Activated CD4-positive, alpha-beta memory T cell treated with anti-CD3 and anti-CD28 coated beads for 36 hours (primary cell): ENCODE measurements at regions of chr7 and their contacts with region 1.

Region 1: DNA sequence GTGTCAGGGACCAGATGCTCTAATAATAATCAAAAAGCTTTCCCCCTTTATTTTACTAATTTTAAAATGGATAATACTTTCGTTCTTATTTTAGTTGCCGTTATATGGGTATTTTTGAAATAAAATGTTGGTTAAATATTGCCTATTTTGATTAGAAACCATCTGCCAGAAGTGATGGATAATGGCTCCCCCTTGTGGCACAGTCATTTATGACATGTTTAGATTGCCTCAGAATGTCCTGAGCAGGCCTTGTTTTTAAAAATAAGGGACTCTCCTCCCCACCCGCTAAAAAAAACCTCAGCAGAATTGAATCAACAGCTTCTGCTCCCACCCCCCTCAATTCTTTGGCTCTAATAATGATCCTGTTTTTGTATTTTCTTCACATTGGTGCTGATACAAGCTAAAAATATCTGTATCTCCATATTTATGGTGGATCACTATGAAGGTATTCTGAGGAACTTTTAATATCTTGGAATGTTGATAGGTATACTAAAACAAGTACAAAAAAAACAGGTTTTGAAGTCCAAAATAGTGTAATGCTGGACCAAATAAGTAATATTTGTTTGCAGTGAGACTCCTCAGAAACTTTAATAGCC is 38.8 kb downstream of the TMEM60 start:
- DNase-seq: peak; percentile 65
- H3K4me3 Mint-ChIP-seq: no peak overlapping the region
- H3K27ac Mint-ChIP-seq: no peak overlapping the region
- H3K4me1 Mint-ChIP-seq: peaks cover 21% of the 10 kb centered on the region
- H3K27me3 Mint-ChIP-seq: no peaks in the 10 kb centered on the region

Region 2: DNA sequence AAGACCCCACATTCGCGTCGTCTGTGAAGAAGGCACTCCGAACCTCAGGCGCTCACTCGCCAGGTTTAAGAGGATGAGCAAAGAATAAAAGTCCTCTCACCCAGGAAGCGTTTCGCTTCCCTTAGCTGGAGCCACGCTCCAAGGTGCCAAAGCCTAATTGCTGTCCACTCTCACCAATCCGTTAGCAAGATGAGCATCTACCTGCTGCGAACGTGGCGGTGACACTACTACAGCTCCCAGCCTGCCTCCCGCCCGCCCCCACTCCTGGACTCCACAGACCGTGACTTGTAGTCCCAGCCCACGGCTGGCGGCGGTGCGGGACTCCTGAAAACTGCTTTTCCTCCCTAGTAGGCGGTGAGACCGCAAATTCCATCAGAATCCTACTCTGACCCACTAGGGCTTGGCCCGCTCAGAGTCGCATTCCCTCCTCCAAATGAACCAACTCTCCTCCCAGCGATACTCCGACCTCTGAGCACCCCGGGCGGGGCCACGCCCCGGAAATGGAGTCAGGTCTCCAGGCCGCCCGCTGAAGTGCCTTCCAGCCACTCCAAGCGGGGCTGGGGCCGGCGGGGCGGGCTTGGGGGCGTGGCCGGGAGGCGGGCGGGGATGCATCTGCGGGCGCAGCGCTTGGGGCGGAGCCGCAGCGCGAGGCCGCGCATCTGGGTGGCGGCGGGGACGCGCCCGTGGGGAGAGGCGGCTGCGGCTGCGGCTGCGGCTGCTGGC is 222.8 kb before region 1 on chr7:
- CTCF ChIA-PET with region 1: no interaction called
- POLR2A ChIA-PET with region 1: no interaction called
- intact Hi-C with region 1: loop called (anchors 5 kb)
- DNase-seq: peak; percentile 99
- H3K4me3 Mint-ChIP-seq: peak overlapping the region; percentile 97
- H3K27ac Mint-ChIP-seq: peak overlapping the region; percentile 87
- H3K4me1 Mint-ChIP-seq: peaks cover 13% of the 10 kb centered on the region
- H3K27me3 Mint-ChIP-seq: no peaks in the 10 kb centered on the region

Region 3: GRCh38 chr7:77657427-77658224 is 101.8 kb before region 1 on chr7:
- CTCF ChIA-PET with region 1: interaction called, 156 read pairs
- POLR2A ChIA-PET with region 1: no interaction called
- intact Hi-C with region 1: loop called (anchors 1 kb)
- DNase-seq: no peak
- H3K4me3 Mint-ChIP-seq: no peak overlapping the region
- H3K27ac Mint-ChIP-seq: no peak overlapping the region
- H3K4me1 Mint-ChIP-seq: no peaks in the 10 kb centered on the region
- H3K27me3 Mint-ChIP-seq: no peaks in the 10 kb centered on the region

Region 4: DNA sequence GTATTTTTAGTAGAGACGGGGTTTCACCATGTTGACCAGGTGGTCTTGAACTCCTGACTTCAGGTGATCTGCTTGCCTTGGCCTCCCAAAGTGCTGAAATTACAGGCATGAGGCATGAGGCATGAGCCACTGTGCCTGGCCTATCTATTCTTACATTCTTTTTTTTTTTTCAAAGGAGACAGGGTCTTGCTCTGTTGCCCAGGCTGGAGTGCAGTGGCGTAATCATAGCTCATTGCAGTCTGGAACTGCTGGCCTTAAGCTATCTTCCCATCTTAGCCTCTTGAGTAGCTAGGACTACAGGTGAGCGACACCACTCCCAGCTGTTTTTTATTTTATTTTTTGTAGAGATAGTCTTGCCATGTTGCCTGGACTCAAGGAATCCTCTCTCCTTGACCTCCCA is 42.6 kb before region 1 on chr7:
- CTCF ChIA-PET with region 1: interaction called, 4 read pairs
- POLR2A ChIA-PET with region 1: no interaction called
- intact Hi-C with region 1: loop called (anchors 1 kb)
- DNase-seq: no peak
- H3K4me3 Mint-ChIP-seq: no peak overlapping the region
- H3K27ac Mint-ChIP-seq: no peak overlapping the region
- H3K4me1 Mint-ChIP-seq: peaks cover 41% of the 10 kb centered on the region
- H3K27me3 Mint-ChIP-seq: no peaks in the 10 kb centered on the region

Region 5: DNA sequence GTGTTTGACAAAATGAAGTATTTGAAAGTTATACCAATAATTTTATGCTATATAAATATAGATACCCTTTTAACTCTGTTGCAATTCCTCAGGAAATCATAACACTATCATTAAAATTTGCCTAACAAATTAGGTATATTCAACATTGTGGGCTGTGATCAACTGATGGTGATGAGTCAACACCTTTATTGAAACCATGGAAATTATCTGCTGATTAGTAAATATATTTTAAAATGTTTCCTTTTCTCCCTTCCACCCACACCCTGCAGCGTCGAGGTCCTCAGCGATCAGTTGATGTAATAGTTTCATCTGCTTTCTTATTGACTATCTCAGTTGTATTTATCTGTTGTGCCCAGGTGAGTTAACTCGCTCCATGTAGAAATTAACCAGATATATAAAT is 183.0 kb after region 1 on chr7:
- CTCF ChIA-PET with region 1: no interaction called
- POLR2A ChIA-PET with region 1: no interaction called
- intact Hi-C with region 1: no loop called
- DNase-seq: no peak
- H3K4me3 Mint-ChIP-seq: no peak overlapping the region
- H3K27ac Mint-ChIP-seq: no peak overlapping the region
- H3K4me1 Mint-ChIP-seq: peaks cover 12% of the 10 kb centered on the region
- H3K27me3 Mint-ChIP-seq: no peaks in the 10 kb centered on the region

Region 6: DNA sequence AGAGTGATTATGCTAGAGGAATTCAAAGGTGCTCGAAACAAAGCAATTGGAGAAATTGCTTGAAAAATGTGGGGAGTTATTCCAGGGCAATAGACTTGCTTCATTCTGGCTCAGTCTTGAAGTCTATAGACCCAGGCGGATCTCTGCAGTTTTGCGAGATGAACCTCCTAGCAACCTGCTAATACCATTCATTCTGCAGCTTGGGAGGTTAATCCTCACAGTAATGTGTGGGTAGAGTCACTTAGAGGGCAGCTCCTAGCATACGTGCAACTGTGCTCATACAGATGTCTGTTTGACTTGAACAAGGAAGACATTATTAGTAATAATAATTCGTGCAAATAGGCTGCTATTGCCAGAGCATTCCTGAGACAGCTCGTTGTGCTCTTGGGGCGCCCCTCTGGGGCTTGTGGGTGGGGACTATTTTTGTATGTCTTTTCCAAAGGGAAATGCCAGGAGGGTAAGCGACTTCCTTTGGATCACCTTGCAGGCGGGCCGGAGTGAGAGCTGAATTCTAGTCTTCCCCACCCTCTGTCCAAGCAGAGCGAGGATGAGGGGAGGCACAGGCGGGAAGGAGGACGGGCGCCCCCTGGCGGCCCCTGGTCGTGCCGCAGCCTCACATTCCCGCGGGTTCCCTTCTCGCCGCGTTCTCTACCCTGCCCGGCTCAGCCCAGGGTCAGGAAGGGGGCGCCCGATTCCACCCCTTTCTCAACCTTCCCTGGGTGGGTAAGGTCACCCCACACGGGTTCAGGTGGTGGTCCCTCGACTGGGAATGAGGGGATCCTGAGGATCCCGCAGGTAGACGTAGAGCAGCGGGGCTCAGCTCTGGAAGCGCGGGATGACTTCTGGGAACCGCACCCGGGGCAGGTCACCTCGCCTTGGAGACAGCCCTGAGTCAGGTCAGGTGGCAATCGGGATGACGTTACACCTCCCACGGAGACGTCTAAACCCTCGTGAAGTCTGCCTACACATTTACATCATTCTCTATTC is 280.7 kb after region 1 on chr7:
- CTCF ChIA-PET with region 1: no interaction called
- POLR2A ChIA-PET with region 1: no interaction called
- intact Hi-C with region 1: loop called (anchors 1 kb)
- DNase-seq: peak; percentile 70
- H3K4me3 Mint-ChIP-seq: no peak overlapping the region
- H3K27ac Mint-ChIP-seq: no peak overlapping the region
- H3K4me1 Mint-ChIP-seq: peaks cover 4% of the 10 kb centered on the region
- H3K27me3 Mint-ChIP-seq: peaks cover 16% of the 10 kb centered on the region

Region 7: DNA sequence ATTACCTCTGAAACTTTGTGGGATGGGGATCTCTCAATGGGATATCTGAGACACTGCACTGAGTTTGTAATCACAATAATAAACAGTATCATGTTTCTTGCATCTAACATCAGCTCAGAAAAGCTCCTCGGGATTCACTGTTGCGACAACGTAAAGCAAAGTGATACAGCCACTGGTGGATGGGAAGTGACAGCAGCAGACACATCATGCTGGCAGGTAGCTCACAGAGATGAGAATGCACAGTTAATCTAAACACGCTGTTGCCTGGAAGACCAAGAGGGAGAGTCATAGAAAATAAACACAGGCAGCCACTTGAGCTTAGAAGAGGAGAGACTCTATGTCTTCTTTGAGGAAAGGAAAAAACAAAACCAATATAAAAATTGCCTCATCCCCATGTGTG is 1180.3 kb after region 1 on chr7:
- CTCF ChIA-PET with region 1: no interaction called
- POLR2A ChIA-PET with region 1: no interaction called
- intact Hi-C with region 1: no loop called
- DNase-seq: no peak
- H3K4me3 Mint-ChIP-seq: no peak overlapping the region
- H3K27ac Mint-ChIP-seq: no peak overlapping the region
- H3K4me1 Mint-ChIP-seq: no peaks in the 10 kb centered on the region
- H3K27me3 Mint-ChIP-seq: no peaks in the 10 kb centered on the region